CD14-positive monocyte (primary cell): ENCODE measurements at regions of chr1 and their contacts with region 1.

Region 1: GRCh38 chr1:100459358-100460114 is 78.4 kb upstream of the GPR88 start:
- DNase-seq: peak; percentile 48 to 56 (median 53)
- H3K4me3 ChIP-seq: no peak overlapping the region
- H3K4me3 Mint-ChIP-seq: no peak overlapping the region
- H3K27ac ChIP-seq: no peak overlapping the region
- H3K27ac Mint-ChIP-seq: peak overlapping the region in 2 of 7 donors; percentile 17 to 53
- H3K4me1 ChIP-seq: peaks cover 6 to 10% of the 10 kb centered on the region in 2 donors
- H3K4me1 Mint-ChIP-seq: peaks cover 13% of the 10 kb centered on the region
- H3K27me3 ChIP-seq: no peaks in the 10 kb centered on the region
- H3K27me3 Mint-ChIP-seq: peaks cover 0 to 2% (median 0%) of the 10 kb centered on the region in 3 donors
- CTCF ChIP-seq: peak; percentile 80

Region 2: GRCh38 chr1:99808391-99809115 is 651.0 kb before region 1 on chr1:
- intact Hi-C with region 1: loop called (anchors 5 to 10 kb)
- DNase-seq: peak; percentile 34 to 65 (median 57)
- H3K4me3 ChIP-seq: no peak overlapping the region
- H3K4me3 Mint-ChIP-seq: peak overlapping the region in 1 of 2 donors; percentile 22
- H3K27ac ChIP-seq: no peak overlapping the region
- H3K27ac Mint-ChIP-seq: no peak overlapping the region
- H3K4me1 ChIP-seq: peaks cover 2 to 6% of the 10 kb centered on the region in 2 donors
- H3K4me1 Mint-ChIP-seq: peaks cover 3% of the 10 kb centered on the region
- H3K27me3 ChIP-seq: no peaks in the 10 kb centered on the region
- H3K27me3 Mint-ChIP-seq: peaks cover 0 to 3% (median 0%) of the 10 kb centered on the region in 3 donors
- CTCF ChIP-seq: peak; percentile 77

Region 3: DNA sequence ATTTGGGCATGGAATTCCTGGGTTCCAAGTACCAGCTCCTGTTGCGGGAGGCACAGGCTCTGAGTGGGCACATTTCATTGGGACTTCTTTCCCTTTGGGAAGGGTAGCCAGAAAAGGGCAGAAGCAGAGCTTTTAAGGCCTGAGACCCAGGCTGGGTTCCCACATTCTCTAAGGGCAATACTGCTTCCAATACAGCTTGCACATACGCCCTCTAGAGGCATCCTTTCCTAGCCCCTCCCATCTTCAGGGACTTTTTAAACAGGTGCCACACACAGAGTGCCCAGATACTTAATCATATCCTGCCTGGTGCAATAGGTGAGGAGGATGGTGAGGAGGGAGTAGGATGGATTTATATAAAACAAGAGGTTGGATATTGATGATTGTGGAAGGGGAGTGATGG is 84.1 kb after region 1 on chr1:
- intact Hi-C with region 1: loop called in 1 of 2 experiments (anchors 5 kb)
- DNase-seq: peak in 2 of 3 donors; percentile 53 to 59
- H3K4me3 ChIP-seq: no peak overlapping the region
- H3K4me3 Mint-ChIP-seq: no peak overlapping the region
- H3K27ac ChIP-seq: no peak overlapping the region
- H3K27ac Mint-ChIP-seq: no peak overlapping the region
- H3K4me1 ChIP-seq: peaks cover 12 to 18% of the 10 kb centered on the region in 2 donors
- H3K4me1 Mint-ChIP-seq: peaks cover 10% of the 10 kb centered on the region
- H3K27me3 ChIP-seq: peaks cover 12 to 15% of the 10 kb centered on the region in 2 donors
- H3K27me3 Mint-ChIP-seq: peaks cover 15 to 22% (median 20%) of the 10 kb centered on the region in 3 donors
- CTCF ChIP-seq: peak; percentile 69

Region 4: GRCh38 chr1:100860397-100860991 is 401.0 kb after region 1 on chr1:
- intact Hi-C with region 1: loop called (anchors 5 kb)
- DNase-seq: no peak
- H3K4me3 ChIP-seq: no peak overlapping the region
- H3K4me3 Mint-ChIP-seq: no peak overlapping the region
- H3K27ac ChIP-seq: no peak overlapping the region
- H3K27ac Mint-ChIP-seq: no peak overlapping the region
- H3K4me1 ChIP-seq: no peaks in the 10 kb centered on the region
- H3K4me1 Mint-ChIP-seq: no peaks in the 10 kb centered on the region
- H3K27me3 ChIP-seq: no peaks in the 10 kb centered on the region
- H3K27me3 Mint-ChIP-seq: no peaks in the 10 kb centered on the region
- CTCF ChIP-seq: no peak

Region 5: DNA sequence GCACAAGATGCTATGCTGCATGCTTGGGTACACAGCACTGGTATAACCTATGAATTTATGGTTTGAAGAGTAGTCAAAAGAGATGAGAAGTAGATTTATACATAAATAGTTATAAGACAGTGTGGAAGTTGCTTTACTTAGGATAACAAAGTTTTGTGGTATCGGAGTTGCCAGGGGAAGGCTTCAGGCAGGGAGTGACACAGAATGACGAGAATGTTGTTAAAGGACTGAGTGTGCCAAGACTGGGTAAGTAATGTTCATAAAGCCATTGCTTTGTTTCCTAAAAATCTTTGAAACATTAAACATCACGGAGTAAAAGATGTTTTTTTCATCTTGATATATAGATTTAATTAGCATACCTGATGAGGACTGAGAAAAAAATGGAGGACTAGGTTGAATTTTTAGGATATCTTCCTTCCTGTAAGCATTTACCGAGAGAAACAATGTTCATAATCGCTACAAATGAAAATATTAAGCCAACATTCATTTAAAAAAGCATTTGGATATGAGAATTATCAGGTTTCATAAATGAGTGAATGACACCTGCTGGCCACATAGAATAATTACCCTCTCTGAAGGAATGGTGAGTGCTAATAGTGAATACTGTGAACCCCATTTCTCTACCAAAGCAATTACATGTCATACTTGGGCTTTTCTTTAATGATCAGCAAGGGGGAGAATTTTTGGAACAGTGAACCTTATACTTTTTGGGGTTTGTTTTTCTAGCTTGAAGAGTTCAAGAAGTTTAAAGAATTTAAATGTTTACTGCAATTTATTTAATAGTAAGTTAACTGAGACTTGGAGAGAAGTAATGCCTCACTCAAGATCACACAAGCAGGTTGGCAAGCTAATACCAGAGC is 406.7 kb after region 1 on chr1:
- intact Hi-C with region 1: loop called (anchors 5 kb)
- DNase-seq: peak; percentile 2 to 25 (median 9)
- H3K4me3 ChIP-seq: no peak overlapping the region
- H3K4me3 Mint-ChIP-seq: no peak overlapping the region
- H3K27ac ChIP-seq: no peak overlapping the region
- H3K27ac Mint-ChIP-seq: no peak overlapping the region
- H3K4me1 ChIP-seq: no peaks in the 10 kb centered on the region
- H3K4me1 Mint-ChIP-seq: no peaks in the 10 kb centered on the region
- H3K27me3 ChIP-seq: no peaks in the 10 kb centered on the region
- H3K27me3 Mint-ChIP-seq: no peaks in the 10 kb centered on the region
- CTCF ChIP-seq: peak; percentile 69